Lower leg skin (tissue), 4 donors: ENCODE measurements at regions of chr12 and their contacts with region 1.

Region 1: GRCh38 chr12:56571126-56571525 is 49.5 kb downstream of the RBMS2 start:
- DNase-seq: no peak
- H3K4me3 ChIP-seq: no peak overlapping the region
- CTCF ChIP-seq: no peak
- POLR2A ChIP-seq: no peak

Region 2: DNA sequence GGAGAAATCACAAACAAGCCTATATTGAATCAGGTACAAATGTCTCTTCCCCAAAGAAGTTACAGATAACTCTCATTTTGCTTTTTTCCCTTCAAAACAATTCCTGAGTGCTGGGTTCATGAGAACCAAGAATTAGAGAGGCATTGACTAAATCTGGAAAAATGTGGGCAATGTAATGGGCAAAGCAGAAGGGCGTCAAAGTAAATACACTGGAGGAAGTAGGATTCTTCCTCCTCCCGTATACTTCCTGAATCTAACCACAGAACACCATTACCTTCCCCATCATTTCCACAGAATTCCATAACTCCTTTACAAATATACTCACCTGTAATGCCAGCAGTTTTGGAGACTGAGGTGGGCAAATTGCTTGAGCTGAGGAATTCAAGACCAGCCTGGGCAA is 52.6 kb before region 1 on chr12:
- intact Hi-C with region 1: loop called (anchors 5 kb)
- DNase-seq: no peak
- H3K4me3 ChIP-seq: no peak overlapping the region
- CTCF ChIP-seq: no peak
- POLR2A ChIP-seq: no peak